CD4-positive, alpha-beta T cell (primary cell): ENCODE measurements at regions of chr17 and their contacts with region 1.

Region 1: DNA sequence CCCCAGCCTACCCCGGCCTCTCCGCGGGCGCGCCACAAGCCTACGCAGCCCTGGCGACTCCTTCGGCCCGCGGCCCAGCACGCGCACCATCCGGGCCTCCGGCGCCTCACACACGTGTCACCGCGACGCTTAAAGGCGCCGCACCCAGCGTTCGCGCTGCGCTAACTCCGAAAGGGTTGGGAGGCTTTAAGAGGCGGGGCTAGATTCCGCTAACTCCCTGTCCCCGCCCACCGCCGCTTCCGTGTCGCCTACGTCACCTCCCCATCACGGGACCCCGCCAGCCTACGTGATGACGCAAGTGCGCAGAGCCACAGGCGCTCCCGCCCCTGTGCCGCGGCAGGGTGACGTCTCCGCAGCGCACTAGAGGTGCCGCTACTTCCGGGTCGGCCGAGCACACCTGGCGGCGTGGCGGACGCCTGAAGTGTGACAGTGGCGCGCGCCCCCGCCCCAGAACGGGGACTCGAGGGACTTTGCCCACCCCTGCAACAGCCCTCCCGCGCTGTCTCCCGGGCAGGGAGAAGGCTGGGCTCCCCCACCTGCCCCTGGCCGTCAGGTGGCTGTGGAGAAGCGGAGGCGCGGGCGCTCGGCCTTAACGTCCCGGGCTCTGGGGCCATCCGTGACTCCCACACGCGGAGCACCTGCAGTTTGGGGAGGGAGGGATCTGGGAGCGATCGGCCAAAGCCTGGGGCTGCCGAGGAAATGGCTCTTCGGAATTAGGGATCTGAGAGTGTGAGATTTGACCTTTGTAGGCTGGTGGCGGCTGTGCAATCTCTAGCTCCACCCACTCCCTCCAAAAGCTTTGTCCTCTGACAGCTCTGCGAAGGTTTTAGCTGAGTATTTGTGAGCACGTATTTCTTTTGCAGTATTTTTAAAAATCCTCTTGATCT is at the start of gene USP36:
- DNase-seq: peak; percentile 99 to 100 (median 100)
- ATAC-seq: peak; percentile 80
- H3K4me3 ChIP-seq: peak within 1 kb of the TSS; percentile 91
- H3K4me3 Mint-ChIP-seq: peak within 1 kb of the TSS; percentile 99
- H3K27ac ChIP-seq: peak within 1 kb of the TSS; percentile 96 to 99
- H3K27ac Mint-ChIP-seq: peak within 1 kb of the TSS; percentile 93
- H3K4me1 ChIP-seq: peaks cover 52% of the 10 kb centered on the region
- H3K4me1 Mint-ChIP-seq: peaks cover 56% of the 10 kb centered on the region
- H3K27me3 ChIP-seq: no peaks in the 10 kb centered on the region
- H3K27me3 Mint-ChIP-seq: no peaks in the 10 kb centered on the region
- CTCF ChIP-seq: peak; percentile 44
- total RNA-seq, gene USP36: 489 to 494 TPM

Region 2: GRCh38 chr17:78444392-78444791 is 396.6 kb before region 1 on chr17:
- CTCF ChIA-PET with region 1: no interaction called
- POLR2A ChIA-PET with region 1: no interaction called
- intact Hi-C with region 1: loop called in 1 of 2 experiments (anchors 2 kb)
- DNase-seq: no peak
- ATAC-seq: no peak
- H3K4me3 ChIP-seq: no peak overlapping the region
- H3K4me3 Mint-ChIP-seq: no peak overlapping the region
- H3K27ac ChIP-seq: no peak overlapping the region
- H3K27ac Mint-ChIP-seq: no peak overlapping the region
- H3K4me1 ChIP-seq: no peaks in the 10 kb centered on the region
- H3K4me1 Mint-ChIP-seq: no peaks in the 10 kb centered on the region
- H3K27me3 ChIP-seq: no peaks in the 10 kb centered on the region
- H3K27me3 Mint-ChIP-seq: no peaks in the 10 kb centered on the region
- CTCF ChIP-seq: no peak

Region 3: GRCh38 chr17:78818932-78819331 is 22.0 kb before region 1 on chr17:
- CTCF ChIA-PET with region 1: interaction called, 10 read pairs
- POLR2A ChIA-PET with region 1: interaction called, 36 read pairs
- intact Hi-C with region 1: loop called (anchors 1 to 2 kb)
- DNase-seq: peak in 13 of 14 experiments; percentile 40 to 88 (median 62)
- ATAC-seq: peak; percentile 59
- H3K4me3 ChIP-seq: peak overlapping the region; percentile 3
- H3K4me3 Mint-ChIP-seq: peak overlapping the region; percentile 71
- H3K27ac ChIP-seq: peak overlapping the region; percentile 76 to 79
- H3K27ac Mint-ChIP-seq: peak overlapping the region; percentile 91
- H3K4me1 ChIP-seq: peaks cover 59% of the 10 kb centered on the region
- H3K4me1 Mint-ChIP-seq: peaks cover 66% of the 10 kb centered on the region
- H3K27me3 ChIP-seq: no peaks in the 10 kb centered on the region
- H3K27me3 Mint-ChIP-seq: no peaks in the 10 kb centered on the region
- CTCF ChIP-seq: no peak